ENCODE measurements at regions of chr5 and their contacts with region 1.

Region 1: GRCh38 chr5:143057580-143057999 is 287.4 kb downstream of the ARHGAP26 start:
- DNase-seq: no peak
- H3K4me3 Mint-ChIP-seq: no peak overlapping the region
- H3K27ac Mint-ChIP-seq: peak overlapping the region; percentile 97
- H3K4me1 Mint-ChIP-seq: peaks cover 77% of the 10 kb centered on the region
- H3K27me3 Mint-ChIP-seq: no peaks in the 10 kb centered on the region

Region 2: DNA sequence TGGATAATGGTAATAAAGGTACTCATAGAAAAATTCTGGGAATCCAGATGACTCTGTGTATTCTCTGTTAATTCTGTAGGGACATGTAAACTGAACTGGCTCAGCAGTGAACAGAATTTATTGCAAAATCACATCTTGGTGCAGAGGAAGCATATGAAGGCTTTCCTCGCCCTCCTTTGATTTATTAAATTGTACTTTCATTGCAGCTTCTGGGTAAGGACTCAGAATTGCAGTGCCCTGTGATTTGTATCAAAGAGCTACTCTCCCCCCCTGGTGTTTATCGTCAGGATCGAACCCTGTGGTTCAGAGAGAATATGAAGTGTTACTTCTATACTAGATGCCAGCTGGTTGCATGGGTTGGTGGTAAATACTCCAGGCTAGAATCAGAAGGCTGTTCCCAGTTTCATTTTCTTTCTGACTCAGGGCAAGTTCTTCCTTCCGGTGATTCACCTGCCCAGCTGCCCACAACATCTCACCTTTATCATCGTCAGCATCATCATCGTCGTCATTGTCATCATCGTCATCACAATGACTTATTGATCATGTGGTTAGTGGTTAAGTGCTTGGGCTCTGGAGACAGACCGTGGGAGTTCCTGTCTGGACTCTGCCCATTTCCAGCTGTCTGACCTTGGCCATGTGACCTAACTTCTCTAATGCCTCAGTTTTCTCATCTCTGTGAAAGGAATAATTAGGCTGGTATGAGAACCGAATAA is 48.6 kb before region 1 on chr5:
- intact Hi-C with region 1: loop called (anchors 1 kb)
- DNase-seq: peak; percentile 82
- H3K4me3 Mint-ChIP-seq: peak overlapping the region; percentile 24
- H3K27ac Mint-ChIP-seq: peak overlapping the region; percentile 86
- H3K4me1 Mint-ChIP-seq: peaks cover 79% of the 10 kb centered on the region
- H3K27me3 Mint-ChIP-seq: no peaks in the 10 kb centered on the region

Region 3: GRCh38 chr5:143037071-143037470 is 20.5 kb before region 1 on chr5:
- intact Hi-C with region 1: loop called (anchors 1 kb)
- DNase-seq: no peak
- H3K4me3 Mint-ChIP-seq: no peak overlapping the region
- H3K27ac Mint-ChIP-seq: peak overlapping the region; percentile 83
- H3K4me1 Mint-ChIP-seq: peaks cover 65% of the 10 kb centered on the region
- H3K27me3 Mint-ChIP-seq: no peaks in the 10 kb centered on the region

Region 4: GRCh38 chr5:143119291-143119769 is 61.7 kb after region 1 on chr5:
- intact Hi-C with region 1: loop called (anchors 1 kb)
- DNase-seq: no peak
- H3K4me3 Mint-ChIP-seq: no peak overlapping the region
- H3K27ac Mint-ChIP-seq: peak overlapping the region; percentile 79
- H3K4me1 Mint-ChIP-seq: peaks cover 60% of the 10 kb centered on the region
- H3K27me3 Mint-ChIP-seq: peaks cover 1% of the 10 kb centered on the region

Region 5: GRCh38 chr5:143605403-143606005 is 547.9 kb after region 1 on chr5:
- intact Hi-C with region 1: loop called (anchors 5 kb)
- DNase-seq: peak; percentile 25
- H3K4me3 Mint-ChIP-seq: peak overlapping the region; percentile 56
- H3K27ac Mint-ChIP-seq: peak overlapping the region; percentile 91
- H3K4me1 Mint-ChIP-seq: peaks cover 38% of the 10 kb centered on the region
- H3K27me3 Mint-ChIP-seq: no peaks in the 10 kb centered on the region